ENCODE measurements at regions of chr14 and their contacts with region 1.

Region 1: GRCh38 chr14:36755725-36756124 is 94.1 kb downstream of the PAX9 start:
- DNase-seq: peak; percentile 75
- H3K4me3 ChIP-seq: no peak overlapping the region
- H3K27ac ChIP-seq: peak overlapping the region; percentile 84
- H3K4me1 ChIP-seq: peaks cover 58% of the 10 kb centered on the region
- H3K27me3 ChIP-seq: no peaks in the 10 kb centered on the region
- CTCF ChIP-seq: peak; percentile 29; the same call in 1 of the 2 replicates

Region 2: DNA sequence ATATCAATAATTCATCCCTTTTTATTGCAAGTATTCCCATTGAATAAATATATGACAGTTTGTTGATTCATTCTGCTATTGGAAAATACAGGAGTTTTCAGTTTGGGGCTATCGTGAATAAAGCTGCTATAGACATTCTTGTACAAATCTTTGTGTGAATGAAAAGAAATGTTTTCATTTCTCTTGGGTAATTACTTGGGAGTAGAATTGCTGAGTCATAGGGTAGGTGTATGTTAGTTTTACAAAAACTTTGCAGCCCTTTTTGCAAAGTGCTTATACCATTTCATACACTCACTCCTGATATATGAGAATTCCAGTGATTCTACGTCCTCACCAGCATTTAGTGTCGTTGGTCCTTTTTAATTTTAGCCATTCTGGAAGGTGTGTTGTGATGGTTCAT is 572.3 kb before region 1 on chr14:
- CTCF ChIA-PET with region 1: no interaction called
- POLR2A ChIA-PET with region 1: no interaction called
- intact Hi-C with region 1: no loop called
- DNase-seq: no peak
- H3K4me3 ChIP-seq: no peak overlapping the region
- H3K27ac ChIP-seq: no peak overlapping the region
- H3K4me1 ChIP-seq: no peaks in the 10 kb centered on the region
- H3K27me3 ChIP-seq: no peaks in the 10 kb centered on the region
- CTCF ChIP-seq: no peak

Region 3: DNA sequence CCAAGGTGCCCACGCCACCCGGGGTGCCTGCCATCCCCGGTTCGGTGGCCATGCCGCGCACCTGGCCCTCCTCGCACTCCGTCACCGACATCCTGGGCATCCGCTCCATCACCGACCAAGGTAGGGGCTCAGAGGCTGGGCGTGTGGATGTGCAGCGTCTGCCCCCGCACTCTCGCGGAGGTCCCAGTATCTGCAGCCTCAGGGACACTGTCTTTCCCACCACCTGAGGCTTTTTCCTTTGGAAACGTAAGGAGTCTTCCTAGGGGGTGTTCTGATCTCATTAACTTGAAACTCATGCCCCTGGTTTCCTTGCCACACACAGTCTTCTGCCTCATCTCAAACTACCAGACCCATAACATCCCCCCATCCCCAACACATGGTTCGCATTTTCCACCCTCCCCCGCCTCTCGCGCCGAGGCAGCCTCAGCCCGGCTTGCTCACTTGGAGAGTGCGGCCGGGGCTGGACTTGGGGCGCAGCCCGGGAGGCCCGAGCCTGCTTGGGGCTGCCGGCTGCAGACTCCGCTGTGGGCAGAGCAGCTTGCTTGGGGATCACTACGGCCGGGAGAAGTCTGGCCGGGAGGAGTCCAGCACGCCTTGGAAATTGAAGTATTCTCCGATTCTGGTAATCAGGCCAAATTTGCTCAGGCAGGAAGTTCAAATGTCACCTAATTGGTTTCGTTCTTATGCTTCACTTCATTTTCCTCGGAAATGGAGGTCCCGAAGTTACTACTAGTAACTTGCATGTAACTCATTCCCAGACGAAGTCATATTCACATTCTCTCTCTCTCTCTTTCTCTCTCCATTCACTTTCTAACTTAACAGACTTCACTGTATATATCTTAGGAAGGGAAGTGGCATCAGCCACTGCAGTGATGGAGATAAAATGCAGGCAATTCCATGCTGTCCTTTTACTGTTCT is 92.1 kb before region 1 on chr14:
- CTCF ChIA-PET with region 1: no interaction called
- POLR2A ChIA-PET with region 1: no interaction called
- intact Hi-C with region 1: loop called (anchors 2 kb)
- DNase-seq: peak; percentile 53
- H3K4me3 ChIP-seq: peak overlapping the region; percentile 63
- H3K27ac ChIP-seq: peak overlapping the region; percentile 82
- H3K4me1 ChIP-seq: peaks cover 34% of the 10 kb centered on the region
- H3K27me3 ChIP-seq: no peaks in the 10 kb centered on the region
- CTCF ChIP-seq: no peak

Region 4: GRCh38 chr14:37090026-37090425 is 334.3 kb after region 1 on chr14:
- CTCF ChIA-PET with region 1: no interaction called
- POLR2A ChIA-PET with region 1: no interaction called
- intact Hi-C with region 1: no loop called
- DNase-seq: peak; percentile 26
- H3K4me3 ChIP-seq: no peak overlapping the region
- H3K27ac ChIP-seq: peak overlapping the region; percentile 67
- H3K4me1 ChIP-seq: peaks cover 45% of the 10 kb centered on the region
- H3K27me3 ChIP-seq: no peaks in the 10 kb centered on the region
- CTCF ChIP-seq: no peak

Measured in A673 (cell line).